ENCODE measurements at regions of chr12 and their contacts with region 1.

Region 1: DNA sequence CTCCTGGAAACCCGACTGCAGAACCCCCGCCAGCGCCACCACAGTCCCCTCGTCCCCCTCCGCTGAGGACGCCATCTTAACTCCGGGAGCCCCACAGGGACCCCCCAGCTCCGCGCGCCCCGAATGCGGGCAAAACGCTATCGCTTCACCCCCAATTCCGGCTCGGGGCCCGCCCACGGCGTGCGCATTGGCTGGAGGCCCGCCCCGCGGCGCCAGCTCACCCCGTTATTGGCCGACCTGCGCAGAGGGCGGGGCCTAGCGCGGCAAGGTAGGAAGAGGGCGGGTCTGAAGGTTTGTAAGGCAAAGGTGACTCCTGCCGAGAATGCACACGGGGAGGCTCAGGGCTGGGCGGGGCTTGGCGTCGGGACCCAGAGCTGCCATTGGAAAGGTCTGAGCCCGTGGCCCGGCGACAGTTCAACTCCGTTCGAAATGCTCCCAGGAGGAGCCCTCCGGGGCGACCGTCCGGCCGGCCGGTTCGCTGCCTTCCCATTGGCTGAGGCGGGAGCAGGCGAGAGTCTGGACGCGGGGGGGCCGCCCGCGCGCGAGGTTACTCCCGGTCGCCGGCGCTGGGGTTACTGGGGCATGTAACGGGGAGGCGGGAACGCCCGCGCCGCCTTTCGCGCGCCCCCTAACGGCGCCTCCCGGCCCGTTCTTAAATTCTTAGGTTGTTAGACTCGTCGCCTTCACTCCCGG is at the start of gene LPCAT3:
- DNase-seq: peak; percentile 90
- ATAC-seq: peak; percentile 95
- H3K4me3 ChIP-seq: peak within 1 kb of the TSS; percentile 90
- H3K27ac ChIP-seq: peak within 1 kb of the TSS; percentile 79
- H3K4me1 ChIP-seq: peaks cover 5% of the 10 kb centered on the region; the same call in 1 of the 2 replicates
- H3K27me3 ChIP-seq: no peaks in the 10 kb centered on the region
- CTCF ChIP-seq: peak; percentile 94
- POLR2A ChIP-seq: no peak
- RAD21 ChIP-seq: peak; percentile 57
- total RNA-seq, gene LPCAT3: 6.4 and 7.0 TPM in 2 replicates

Region 2: GRCh38 chr12:7092229-7092985 is 73.9 kb after region 1 on chr12 and contains the start of gene C1R:
- CTCF ChIA-PET with region 1: no interaction called
- POLR2A ChIA-PET with region 1: no interaction called
- dilution Hi-C with region 1: no loop called
- in situ Hi-C with region 1: no loop called
- intact Hi-C with region 1: loop called (anchors 1 kb)
- DNase-seq: peak; percentile 92
- ATAC-seq: peak; percentile 94
- H3K4me3 ChIP-seq: peak within 1 kb of the TSS; percentile 55
- H3K27ac ChIP-seq: peak within 1 kb of the TSS; percentile 84
- H3K4me1 ChIP-seq: peaks cover 26% of the 10 kb centered on the region
- H3K27me3 ChIP-seq: no peaks in the 10 kb centered on the region
- CTCF ChIP-seq: peak; percentile 94
- POLR2A ChIP-seq: no peak
- RAD21 ChIP-seq: peak; percentile 85
- total RNA-seq, gene C1R: 19.4 and 38.4 TPM in 2 replicates

Region 3: GRCh38 chr12:7108796-7109571 is 90.5 kb after region 1 on chr12 and contains the start of gene C1RL:
- CTCF ChIA-PET with region 1: no interaction called
- POLR2A ChIA-PET with region 1: no interaction called
- dilution Hi-C with region 1: no loop called
- in situ Hi-C with region 1: no loop called
- intact Hi-C with region 1: loop called (anchors 1 kb)
- DNase-seq: peak; percentile 77
- ATAC-seq: peak; percentile 58
- H3K4me3 ChIP-seq: peak within 1 kb of the TSS; percentile 66
- H3K27ac ChIP-seq: peak within 1 kb of the TSS; percentile 97
- H3K4me1 ChIP-seq: peaks cover 5% of the 10 kb centered on the region; the same call in 1 of the 2 replicates
- H3K27me3 ChIP-seq: no peaks in the 10 kb centered on the region
- CTCF ChIP-seq: peak; percentile 93
- POLR2A ChIP-seq: peak; percentile 15; the same call in 1 of the 2 replicates
- RAD21 ChIP-seq: peak; percentile 79
- total RNA-seq, gene C1RL: 7.5 and 9.1 TPM in 2 replicates